SK-N-SH (cell line): ENCODE measurements at regions of chr20 and their contacts with region 1.

Region 1: DNA sequence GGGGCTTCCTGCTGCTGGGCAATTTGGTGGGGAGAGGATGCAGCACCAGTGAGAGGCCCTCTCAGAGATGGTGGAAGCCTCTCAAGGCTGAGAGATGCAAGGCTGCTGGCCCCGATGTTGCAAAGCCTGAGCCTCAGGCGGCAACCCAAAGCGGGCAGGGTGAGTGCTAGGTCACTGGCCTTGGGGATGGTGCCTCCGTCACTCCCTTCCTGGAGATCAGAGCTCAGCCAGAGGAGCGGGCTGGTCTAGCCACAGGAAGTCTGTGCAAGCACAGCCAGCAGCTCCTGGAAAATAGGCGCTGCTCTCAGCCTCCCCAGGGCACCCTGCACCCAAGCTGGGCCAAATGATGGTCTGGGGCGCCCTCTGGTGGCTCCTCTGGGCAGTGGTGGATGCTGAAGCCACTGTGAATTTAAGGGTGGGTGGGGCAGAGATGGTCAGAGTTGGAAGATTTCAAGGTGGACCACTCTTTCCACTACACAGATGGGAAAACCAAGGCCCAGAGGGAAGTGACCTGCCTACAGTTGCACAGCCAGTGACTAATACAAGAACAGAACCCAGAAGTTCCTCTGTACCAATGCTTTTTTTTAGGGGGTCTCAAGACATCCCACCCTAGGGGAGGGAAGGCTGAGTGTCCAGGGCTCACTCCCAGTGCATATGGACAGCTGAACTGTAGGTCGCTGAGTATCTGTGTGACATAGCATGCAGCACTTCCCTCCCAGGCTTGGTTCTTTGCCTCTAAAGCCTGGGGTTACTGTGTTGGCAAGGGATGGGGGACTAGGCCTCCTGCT is 20.8 kb downstream of the C20orf203 start:
- DNase-seq: peak; percentile 91
- H3K4me3 ChIP-seq: peak overlapping the region in 1 of 2 experiments; percentile 60; a peak in 1 of 4 replicates
- H3K27ac ChIP-seq: peak overlapping the region in 1 of 2 experiments; percentile 24; a peak in 1 of 4 replicates
- H3K4me1 ChIP-seq: peaks cover 0 to 5% of the 10 kb centered on the region in 2 experiments; a peak in 1 of 4 replicates
- H3K27me3 ChIP-seq: no peaks in the 10 kb centered on the region
- CTCF ChIP-seq: peak; percentile 93
- EP300 ChIP-seq: no peak
- RAD21 ChIP-seq: peak; percentile 99

Region 2: DNA sequence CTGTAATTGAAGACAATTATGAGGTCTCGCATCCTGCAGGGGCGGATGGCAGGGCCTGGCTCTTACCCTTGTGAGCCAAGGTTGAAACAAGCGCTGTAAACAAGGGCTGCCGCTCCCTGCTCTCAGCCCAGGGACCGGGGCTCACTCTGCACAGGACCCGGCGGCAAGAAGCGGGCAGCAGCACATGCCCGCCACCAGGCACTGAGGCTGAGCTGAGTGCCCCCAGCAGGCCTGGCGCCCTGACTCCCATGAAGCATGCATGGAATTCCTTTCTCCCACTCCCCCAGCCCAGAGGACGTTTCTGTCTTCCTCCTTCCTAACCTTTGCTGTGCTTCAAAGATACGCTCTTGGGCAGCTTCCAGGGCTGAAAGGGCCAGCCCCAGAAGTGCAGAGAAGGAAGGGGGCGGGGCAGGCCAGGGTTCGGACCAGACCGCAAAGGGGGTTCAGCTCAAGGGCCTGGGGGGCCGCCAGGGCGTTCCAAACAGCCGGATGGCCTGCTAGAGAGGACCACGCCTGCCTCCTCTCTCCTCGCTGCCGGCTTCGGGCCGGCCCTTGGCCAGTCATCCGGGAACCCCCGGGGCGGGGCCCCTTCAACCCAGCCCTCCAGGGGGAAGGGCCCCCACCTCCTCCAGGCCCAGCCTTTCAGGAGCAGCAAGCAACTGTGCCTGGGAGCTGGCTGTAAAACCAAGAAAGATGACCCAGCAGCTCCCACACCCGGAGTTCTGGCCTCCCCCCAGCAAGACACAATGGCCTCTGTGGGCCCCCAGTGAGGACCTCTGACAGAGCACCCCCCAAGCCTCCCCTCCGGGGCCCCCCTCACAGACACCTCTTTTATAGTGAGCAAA is 177.7 kb before region 1 on chr20:
- CTCF ChIA-PET with region 1: interaction called, 11 read pairs
- POLR2A ChIA-PET with region 1: no interaction called
- DNase-seq: peak; percentile 59
- H3K4me3 ChIP-seq: peak overlapping the region; percentile 32 to 56; a peak in 3 of 4 replicates
- H3K27ac ChIP-seq: peak overlapping the region; percentile 70 to 85
- H3K4me1 ChIP-seq: peaks cover 42 to 61% of the 10 kb centered on the region in 2 experiments; a peak in 3 of 4 replicates
- H3K27me3 ChIP-seq: no peaks in the 10 kb centered on the region
- CTCF ChIP-seq: 0 out of 2 replicates have a peak, but pooled peaks have one; percentile 9
- EP300 ChIP-seq: peak in 1 of 2 experiments; percentile 78; a peak in 2 of 4 replicates
- RAD21 ChIP-seq: no peak

Region 3: GRCh38 chr20:32484958-32485769 is 167.8 kb before region 1 on chr20:
- CTCF ChIA-PET with region 1: interaction called, 11 read pairs
- POLR2A ChIA-PET with region 1: no interaction called
- DNase-seq: peak; percentile 61
- H3K4me3 ChIP-seq: peak overlapping the region; percentile 53 to 61
- H3K27ac ChIP-seq: peak overlapping the region; percentile 87 to 100
- H3K4me1 ChIP-seq: peaks cover 0 to 33% of the 10 kb centered on the region in 2 experiments; a peak in 2 of 4 replicates
- H3K27me3 ChIP-seq: no peaks in the 10 kb centered on the region
- CTCF ChIP-seq: peak; percentile 79
- EP300 ChIP-seq: no peak
- RAD21 ChIP-seq: peak; percentile 72

Region 4: DNA sequence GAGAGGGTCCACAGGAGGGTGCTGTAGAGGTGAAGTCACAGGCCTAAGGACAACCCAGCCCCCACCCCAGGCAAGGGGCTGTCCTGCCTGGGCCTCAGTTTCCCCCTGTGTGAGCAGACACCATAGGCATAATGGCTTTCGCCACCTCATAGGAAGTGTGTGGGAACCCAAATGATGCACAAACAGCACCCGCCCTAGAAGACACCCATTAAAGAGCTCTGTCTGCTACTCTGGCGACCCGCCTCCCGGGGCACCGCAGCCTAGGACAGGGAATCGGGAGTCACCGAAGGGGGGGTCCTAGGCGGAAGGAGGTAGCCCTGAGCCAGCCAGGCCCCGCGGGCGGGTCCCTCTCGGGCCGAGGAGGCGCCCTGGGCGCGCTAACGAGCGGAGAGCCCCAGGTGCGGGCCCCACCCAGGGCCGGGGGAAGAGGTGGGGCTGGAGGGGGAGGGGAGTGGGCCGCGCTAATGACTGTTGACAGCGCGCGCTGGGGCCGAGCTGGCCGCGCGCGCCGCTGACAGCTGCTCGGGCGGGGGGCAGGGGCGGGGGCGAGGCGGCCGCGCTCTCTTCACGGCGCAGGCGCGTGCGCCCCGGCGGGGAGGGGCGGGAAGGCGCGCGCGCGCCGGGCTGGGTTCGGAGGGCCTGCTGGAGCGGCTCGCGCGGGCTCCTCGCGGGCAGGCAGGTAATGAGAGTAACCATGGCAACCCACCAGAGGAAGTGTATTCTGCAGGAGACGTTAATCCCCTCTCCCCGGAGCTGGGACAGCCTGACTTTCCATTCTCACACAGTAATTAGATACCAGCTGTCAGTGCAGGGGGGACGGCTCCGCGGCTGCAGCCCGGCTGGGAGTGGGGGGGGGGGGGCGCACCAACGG is 116.7 kb before region 1 on chr20:
- CTCF ChIA-PET with region 1: interaction called, 10 read pairs
- POLR2A ChIA-PET with region 1: no interaction called
- DNase-seq: peak; percentile 96
- H3K4me3 ChIP-seq: peak overlapping the region; percentile 23 to 49; a peak in 2 of 4 replicates
- H3K27ac ChIP-seq: no peak overlapping the region; a peak in 1 of 4 replicates
- H3K4me1 ChIP-seq: peaks cover 0 to 48% of the 10 kb centered on the region in 2 experiments; a peak in 1 of 4 replicates
- H3K27me3 ChIP-seq: no peaks in the 10 kb centered on the region; the same call in 1 of the 2 replicates
- CTCF ChIP-seq: no peak
- EP300 ChIP-seq: no peak
- RAD21 ChIP-seq: no peak

Region 5: GRCh38 chr20:32638848-32639247 is 14.1 kb before region 1 on chr20:
- CTCF ChIA-PET with region 1: interaction called, 24 read pairs
- POLR2A ChIA-PET with region 1: no interaction called
- DNase-seq: peak; percentile 81
- H3K4me3 ChIP-seq: no peak overlapping the region
- H3K27ac ChIP-seq: peak overlapping the region in 1 of 2 experiments; percentile 35; a peak in 1 of 4 replicates
- H3K4me1 ChIP-seq: peaks cover 0 to 26% of the 10 kb centered on the region in 2 experiments; a peak in 1 of 4 replicates
- H3K27me3 ChIP-seq: 0 out of 2 replicates have a peak, but pooled peaks cover 17% of the 10 kb centered on the region
- CTCF ChIP-seq: no peak
- EP300 ChIP-seq: no peak
- RAD21 ChIP-seq: no peak

Region 6: GRCh38 chr20:32664678-32665159 is 11.8 kb after region 1 on chr20:
- CTCF ChIA-PET with region 1: interaction called, 11 read pairs
- POLR2A ChIA-PET with region 1: no interaction called
- DNase-seq: no peak
- H3K4me3 ChIP-seq: no peak overlapping the region
- H3K27ac ChIP-seq: no peak overlapping the region
- H3K4me1 ChIP-seq: no peaks in the 10 kb centered on the region; a peak in 1 of 4 replicates
- H3K27me3 ChIP-seq: no peaks in the 10 kb centered on the region
- CTCF ChIP-seq: no peak
- EP300 ChIP-seq: no peak
- RAD21 ChIP-seq: no peak

Region 7: GRCh38 chr20:32908334-32909292 is 255.7 kb after region 1 on chr20:
- CTCF ChIA-PET with region 1: no interaction called
- POLR2A ChIA-PET with region 1: no interaction called
- DNase-seq: no peak
- H3K4me3 ChIP-seq: no peak overlapping the region
- H3K27ac ChIP-seq: no peak overlapping the region
- H3K4me1 ChIP-seq: peaks cover 0 to 3% of the 10 kb centered on the region in 2 experiments; a peak in 1 of 4 replicates
- H3K27me3 ChIP-seq: peaks cover 6% of the 10 kb centered on the region; the same call in 1 of the 2 replicates
- CTCF ChIP-seq: no peak
- EP300 ChIP-seq: no peak
- RAD21 ChIP-seq: no peak